ENCODE measurements at regions of chr3 and their contacts with region 1.

Region 1: GRCh38 chr3:183188895-183189462 is 26.4 kb upstream of the LAMP3 start:
- DNase-seq: no peak
- ATAC-seq: peak; percentile 88
- H3K4me3 ChIP-seq: no peak overlapping the region
- H3K27ac ChIP-seq: no peak overlapping the region
- H3K4me1 ChIP-seq: peaks cover 2% of the 10 kb centered on the region; the same call in 1 of the 2 replicates
- H3K27me3 ChIP-seq: no peaks in the 10 kb centered on the region
- CTCF ChIP-seq: peak; percentile 49 to 60 (median 57); a peak in 5 of 6 replicates
- EP300 ChIP-seq: no peak
- POLR2A ChIP-seq: no peak
- RAD21 ChIP-seq: peak; percentile 61

Region 2: GRCh38 chr3:183129243-183129642 is 59.7 kb before region 1 on chr3:
- CTCF ChIA-PET with region 1: interaction called, 140 read pairs
- POLR2A ChIA-PET with region 1: no interaction called
- RAD21 ChIA-PET with region 1: interaction called, 89 read pairs
- SMC1A ChIA-PET with region 1: interaction called, 71 read pairs
- in situ Hi-C with region 1: no loop called
- intact Hi-C with region 1: no loop called
- DNase-seq: no peak
- ATAC-seq: no peak
- H3K4me3 ChIP-seq: no peak overlapping the region
- H3K27ac ChIP-seq: no peak overlapping the region
- H3K4me1 ChIP-seq: peaks cover 2% of the 10 kb centered on the region; the same call in 1 of the 2 replicates
- H3K27me3 ChIP-seq: no peaks in the 10 kb centered on the region
- CTCF ChIP-seq: no peak
- EP300 ChIP-seq: no peak
- POLR2A ChIP-seq: no peak
- RAD21 ChIP-seq: no peak

Region 3: DNA sequence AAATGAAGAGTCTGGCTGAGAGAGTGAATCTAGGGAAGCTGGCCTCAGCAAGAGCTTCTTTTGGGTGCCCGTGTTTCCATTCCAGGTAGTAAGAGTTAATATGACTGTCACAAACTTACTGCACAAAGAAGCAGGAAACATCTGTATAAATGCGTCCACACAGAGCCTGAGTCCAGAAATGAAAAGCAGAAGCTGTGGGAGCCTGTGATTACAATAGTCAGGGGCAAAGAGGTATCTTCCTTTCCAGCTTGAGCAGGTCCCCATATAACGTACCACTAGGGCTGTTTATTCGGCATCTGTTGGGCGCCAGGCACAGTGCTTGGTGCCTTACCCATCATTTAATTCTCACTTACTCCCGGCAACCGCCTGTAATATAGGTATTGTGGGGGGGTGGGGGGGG is 23.6 kb after region 1 on chr3:
- CTCF ChIA-PET with region 1: interaction called, 8 read pairs
- POLR2A ChIA-PET with region 1: no interaction called
- RAD21 ChIA-PET with region 1: interaction called, 11 read pairs
- SMC1A ChIA-PET with region 1: interaction called, 6 read pairs
- in situ Hi-C with region 1: no loop called
- intact Hi-C with region 1: no loop called
- DNase-seq: no peak
- ATAC-seq: peak; percentile 66
- H3K4me3 ChIP-seq: no peak overlapping the region
- H3K27ac ChIP-seq: no peak overlapping the region
- H3K4me1 ChIP-seq: no peaks in the 10 kb centered on the region
- H3K27me3 ChIP-seq: 0 out of 4 replicates have a peak, but pooled peaks cover 0 to 5% of the 10 kb centered on the region in 2 experiments
- CTCF ChIP-seq: no peak
- EP300 ChIP-seq: no peak
- POLR2A ChIP-seq: no peak
- RAD21 ChIP-seq: no peak

Region 4: GRCh38 chr3:183285828-183286457 is 97.0 kb after region 1 on chr3:
- CTCF ChIA-PET with region 1: interaction called, 13 read pairs
- POLR2A ChIA-PET with region 1: interaction called, 9 read pairs
- RAD21 ChIA-PET with region 1: interaction called, 17 read pairs
- SMC1A ChIA-PET with region 1: interaction called, 23 read pairs
- in situ Hi-C with region 1: no loop called
- intact Hi-C with region 1: no loop called
- DNase-seq: peak; percentile 81
- ATAC-seq: peak; percentile 95
- H3K4me3 ChIP-seq: no peak overlapping the region
- H3K27ac ChIP-seq: peak overlapping the region; percentile 2; the same call in 1 of the 2 replicates
- H3K4me1 ChIP-seq: peaks cover 5% of the 10 kb centered on the region
- H3K27me3 ChIP-seq: no peaks in the 10 kb centered on the region
- CTCF ChIP-seq: no peak
- EP300 ChIP-seq: peak; percentile 66 to 76; a peak in 3 of 4 replicates
- POLR2A ChIP-seq: no peak
- RAD21 ChIP-seq: no peak

Region 5: DNA sequence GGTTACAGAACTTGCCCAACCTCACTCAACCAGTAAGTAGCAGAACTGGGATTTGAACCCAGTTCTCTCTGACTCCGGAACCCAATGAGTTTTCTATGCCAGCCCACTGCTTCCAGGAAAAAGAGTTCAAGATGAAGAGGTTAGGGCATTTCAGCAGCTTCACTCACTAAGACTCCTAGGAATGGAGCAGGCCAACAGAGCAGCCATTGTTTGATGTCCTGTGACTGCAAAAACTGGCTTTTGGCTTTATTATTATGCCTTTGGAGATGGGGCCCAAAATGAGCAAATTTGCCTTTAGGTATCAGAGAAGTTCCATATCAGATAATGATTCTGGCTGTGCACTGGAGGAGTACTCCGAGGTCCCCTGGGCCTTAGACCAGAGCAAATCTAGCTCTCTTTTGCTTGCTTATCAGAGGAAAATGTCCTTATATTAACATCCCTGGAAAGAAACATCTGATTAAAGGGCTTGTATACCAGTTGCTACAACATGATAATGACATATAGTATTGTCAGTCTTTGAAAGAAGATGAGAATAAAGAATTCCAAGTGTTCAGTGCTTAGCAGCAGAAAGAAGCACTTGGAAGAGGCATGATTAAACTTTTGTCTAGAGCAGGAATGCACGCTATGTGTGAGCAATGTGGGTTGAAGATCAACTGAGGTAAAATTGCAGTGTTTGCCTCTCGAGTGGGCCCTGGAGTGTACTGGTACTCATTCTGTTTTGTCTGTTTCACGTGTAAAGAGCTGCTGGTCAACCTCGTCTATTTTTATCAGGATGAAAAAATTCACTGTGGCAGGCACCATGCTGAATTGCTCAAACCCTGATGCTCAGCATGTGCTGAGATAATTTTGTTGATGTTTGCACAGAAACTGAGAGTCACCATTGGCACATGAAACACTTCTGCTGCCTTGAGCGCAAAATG is 424.6 kb after region 1 on chr3:
- CTCF ChIA-PET with region 1: no interaction called
- POLR2A ChIA-PET with region 1: interaction called, 10 read pairs
- RAD21 ChIA-PET with region 1: no interaction called
- SMC1A ChIA-PET with region 1: no interaction called
- in situ Hi-C with region 1: no loop called
- intact Hi-C with region 1: no loop called
- DNase-seq: no peak
- ATAC-seq: no peak
- H3K4me3 ChIP-seq: no peak overlapping the region
- H3K27ac ChIP-seq: no peak overlapping the region
- H3K4me1 ChIP-seq: no peaks in the 10 kb centered on the region
- H3K27me3 ChIP-seq: no peaks in the 10 kb centered on the region
- CTCF ChIP-seq: no peak
- EP300 ChIP-seq: no peak
- POLR2A ChIP-seq: no peak
- RAD21 ChIP-seq: no peak

Measured in GM12878 (cell line).